Activated CD4-positive, alpha-beta T cell treated with anti-CD3 and anti-CD28 coated beads, Interleukin-2, amount 10 ng/mL, durations not matched to agents 24 days and 14 days (primary cell): ENCODE measurements at regions of chrX and their contacts with region 1.

Region 1: GRCh38 chrX:71118032-71118984 is at the start of gene MED12:
- DNase-seq: peak; percentile 95
- H3K4me3 Mint-ChIP-seq: peak within 1 kb of the TSS; percentile 84
- H3K27ac Mint-ChIP-seq: peak within 1 kb of the TSS; percentile 86
- H3K4me1 Mint-ChIP-seq: peaks cover 16% of the 10 kb centered on the region
- H3K27me3 Mint-ChIP-seq: no peaks in the 10 kb centered on the region
- total RNA-seq, gene MED12: 61.0 and 65.9 TPM in 2 replicates

Region 2: DNA sequence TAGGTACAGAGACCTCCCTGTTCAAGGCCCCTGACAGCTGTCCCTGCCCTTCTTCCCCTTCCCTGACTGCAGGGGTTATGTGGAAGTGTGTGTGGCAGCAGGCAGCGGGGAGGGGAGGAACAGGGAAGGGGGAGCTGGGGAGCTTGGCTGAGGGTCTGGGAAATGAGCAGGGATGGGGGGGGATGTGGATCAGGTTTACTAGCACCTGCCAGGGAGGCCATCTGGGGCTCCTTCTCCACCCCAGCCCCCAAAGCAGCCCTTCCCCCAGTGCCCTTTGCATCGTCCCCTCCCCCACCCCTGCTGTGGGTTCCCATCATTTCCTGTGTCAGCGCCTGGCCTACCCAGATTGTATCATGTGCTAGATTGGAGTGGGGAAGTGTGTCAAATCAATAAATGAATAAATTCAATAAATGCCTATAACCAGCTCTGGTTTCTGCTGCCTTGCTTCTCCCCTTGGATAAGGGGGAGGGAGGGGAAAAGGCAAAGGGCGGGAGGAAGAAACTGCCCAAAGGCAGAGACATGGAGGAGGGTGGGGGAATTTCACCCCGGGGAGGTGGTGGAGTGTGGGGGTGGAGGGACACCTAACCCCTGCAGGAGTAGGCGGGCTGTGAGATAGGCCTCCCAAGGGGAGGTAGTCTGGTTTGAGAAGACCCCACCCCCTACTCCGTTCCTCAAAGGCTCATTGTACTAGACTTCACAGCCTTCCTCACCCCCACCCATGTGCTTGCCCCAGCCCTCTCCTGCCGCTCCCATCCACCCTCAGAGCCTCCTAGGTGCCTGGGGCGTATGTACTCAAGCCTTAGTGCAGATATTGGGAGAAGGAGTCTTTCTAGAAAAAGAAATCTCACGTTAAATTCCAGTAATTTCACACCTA is 15.0 kb before region 1 on chrX:
- intact Hi-C with region 1: loop called (anchors 1 kb)
- DNase-seq: peak; percentile 82
- H3K4me3 Mint-ChIP-seq: peak overlapping the region; percentile 83
- H3K27ac Mint-ChIP-seq: peak overlapping the region; percentile 92
- H3K4me1 Mint-ChIP-seq: peaks cover 60% of the 10 kb centered on the region
- H3K27me3 Mint-ChIP-seq: no peaks in the 10 kb centered on the region

Region 3: DNA sequence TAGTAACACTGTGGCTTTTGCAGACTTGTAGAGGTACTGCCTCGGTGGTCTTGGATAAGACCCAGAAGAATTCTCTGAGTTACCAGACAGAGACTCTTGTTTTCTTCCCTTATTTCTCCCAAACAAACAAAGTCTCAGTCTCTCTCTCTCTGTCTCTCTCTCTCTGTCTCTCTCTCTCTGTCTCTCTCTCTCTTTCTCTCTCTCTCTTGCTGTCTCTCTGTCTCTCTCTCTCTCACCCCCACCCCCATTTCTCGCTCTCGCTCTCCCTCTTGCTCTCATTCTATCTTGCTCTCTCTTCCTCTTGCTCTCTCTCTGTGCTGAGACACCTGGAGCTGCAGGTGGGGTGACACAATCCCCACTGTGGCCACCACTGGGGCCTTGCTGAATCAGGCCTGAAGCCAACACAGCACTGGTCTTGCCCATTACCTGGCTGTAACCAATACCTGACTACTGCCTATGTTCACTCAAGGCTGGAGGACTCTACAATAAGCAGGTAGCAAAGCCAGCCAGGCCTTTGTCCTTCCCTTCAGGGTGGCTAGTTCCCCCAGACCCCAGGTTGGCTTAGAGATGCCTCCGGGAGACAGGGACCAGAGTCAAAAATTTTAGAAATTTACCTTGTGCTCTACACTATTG is 561.4 kb after region 1 on chrX:
- intact Hi-C with region 1: no loop called
- DNase-seq: peak; percentile 18
- H3K4me3 Mint-ChIP-seq: no peak overlapping the region
- H3K27ac Mint-ChIP-seq: no peak overlapping the region
- H3K4me1 Mint-ChIP-seq: no peaks in the 10 kb centered on the region
- H3K27me3 Mint-ChIP-seq: peaks cover 15% of the 10 kb centered on the region